Dorsolateral prefrontal cortex (tissue), 120 donors: ENCODE measurements at regions of chr4 and their contacts with region 1.

Region 1: DNA sequence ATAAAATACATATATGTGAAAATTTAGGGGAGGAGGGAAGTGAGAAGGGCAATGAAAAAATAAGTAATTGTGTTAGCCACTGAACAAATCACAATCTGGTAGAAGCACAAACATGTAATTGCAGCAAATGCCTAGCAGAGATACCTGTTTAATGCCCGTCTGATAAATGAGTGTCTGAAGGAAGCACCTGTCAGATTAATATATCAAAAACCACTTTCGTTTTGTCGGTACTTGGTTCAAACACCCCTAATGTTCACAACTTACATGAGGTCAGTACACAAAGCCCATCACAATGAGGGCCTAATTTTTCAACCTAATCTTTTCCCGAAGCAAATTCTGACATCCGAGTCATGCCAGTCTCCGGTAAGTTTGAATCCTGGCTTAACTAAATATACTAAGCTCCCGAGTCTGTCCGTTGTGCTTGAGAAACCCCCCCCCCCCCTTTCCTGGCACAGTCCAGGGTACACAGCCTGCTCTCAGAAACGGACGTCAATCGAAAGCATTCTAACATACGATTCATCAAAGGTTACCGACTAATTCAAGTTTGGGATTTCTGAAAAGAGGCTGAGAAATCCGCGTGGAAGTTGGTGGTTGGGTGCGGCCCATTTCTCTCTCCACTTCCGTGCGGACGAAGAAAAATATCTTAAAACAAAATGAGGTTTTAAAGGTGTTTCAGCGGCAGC is 758 bp downstream of the SDAD1 start:
- DNase-seq: no peak
- H3K4me3 ChIP-seq: peak overlapping the region; percentile 65 to 99 (median 89)
- H3K27ac ChIP-seq: peak overlapping the region in 23 of 59 donors; percentile 2 to 88 (median 80)
- H3K27me3 ChIP-seq: no peaks in the 10 kb centered on the region
- CTCF ChIP-seq: no peak

Region 2: DNA sequence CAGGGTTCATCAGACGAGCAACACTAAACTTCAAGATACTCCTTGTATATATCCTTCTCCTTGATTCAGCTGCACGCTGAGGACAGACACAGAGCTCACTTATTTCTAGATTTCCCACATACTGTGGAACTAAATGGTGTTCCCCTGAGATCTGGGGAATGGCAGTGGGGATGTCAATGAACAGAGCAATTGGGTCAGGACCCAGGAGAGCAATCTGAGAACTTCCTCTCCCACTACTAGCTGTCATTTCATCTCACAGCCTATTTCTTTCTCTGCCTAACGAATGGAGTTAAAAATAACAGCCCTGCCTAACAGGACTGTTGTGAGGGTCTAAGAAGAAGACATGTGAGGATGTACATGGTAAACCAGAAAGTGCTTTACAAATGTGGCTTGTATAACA is 59.8 kb before region 1 on chr4:
- intact Hi-C with region 1: loop called in 1 of 2 experiments (anchors 5 kb)
- DNase-seq: no peak
- H3K4me3 ChIP-seq: no peak overlapping the region
- H3K27ac ChIP-seq: no peak overlapping the region
- H3K27me3 ChIP-seq: no peaks in the 10 kb centered on the region
- CTCF ChIP-seq: no peak

Region 3: DNA sequence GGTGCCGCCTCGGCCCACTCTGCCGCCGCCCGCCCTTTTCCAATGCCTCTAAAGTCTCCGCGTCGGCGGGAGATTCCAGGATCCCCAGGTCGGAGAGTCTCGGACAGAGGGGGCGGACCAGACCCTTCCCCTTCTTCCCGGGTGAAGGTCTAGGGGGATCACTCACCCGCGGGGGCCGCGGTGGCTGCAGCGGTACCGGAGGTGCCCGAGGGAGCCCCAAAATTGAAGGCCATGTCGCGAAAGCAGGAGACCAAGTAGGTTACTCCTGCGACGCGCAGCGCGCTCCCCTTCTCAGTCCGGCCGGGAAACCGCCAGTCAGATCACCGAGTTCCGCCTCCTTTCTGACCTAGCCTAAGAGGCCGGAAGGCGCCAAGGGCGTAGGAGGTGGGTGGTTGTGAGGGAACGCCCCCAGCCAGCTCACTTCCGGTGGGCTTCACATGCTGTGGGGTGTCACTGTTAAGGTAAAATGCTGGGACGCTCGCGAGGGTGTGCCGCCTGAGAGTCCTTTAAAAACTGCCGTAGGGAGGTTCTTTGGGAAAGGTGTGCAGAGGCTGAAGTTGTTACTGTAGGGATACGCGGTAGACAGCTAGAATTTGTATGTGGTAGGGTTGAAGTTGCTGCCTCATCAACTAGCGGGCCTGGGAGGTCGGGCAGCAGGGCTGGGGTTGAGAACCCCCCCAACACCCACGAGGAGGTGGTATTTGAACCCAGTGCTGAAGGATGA is 158.3 kb after region 1 on chr4 and contains the start of gene NUP54:
- intact Hi-C with region 1: loop called (anchors 2 kb)
- DNase-seq: peak; percentile 89 to 96 (median 94)
- H3K4me3 ChIP-seq: peak within 1 kb of the TSS; percentile 71 to 100 (median 93)
- H3K27ac ChIP-seq: peak within 1 kb of the TSS; percentile 9 to 96 (median 85)
- H3K27me3 ChIP-seq: no peaks in the 10 kb centered on the region
- CTCF ChIP-seq: peak in 31 of 56 donors; percentile 9 to 55 (median 30)
- total RNA-seq, gene NUP54: 26.9 to 65.4 (median 45.4) TPM